ENCODE measurements at regions of chr14 and their contacts with region 1.

Region 1: GRCh38 chr14:100306420-100307219 is at the start of gene SLC25A29:
- DNase-seq: peak; percentile 80 to 81
- ATAC-seq: peak; percentile 93 to 96 (median 95)
- H3K4me3 ChIP-seq: peak within 1 kb of the TSS; percentile 69
- H3K4me3 Mint-ChIP-seq: peak within 1 kb of the TSS; percentile 93
- H3K27ac ChIP-seq: peak within 1 kb of the TSS; percentile 64
- H3K27ac Mint-ChIP-seq: peak within 1 kb of the TSS; percentile 64 to 82
- H3K4me1 ChIP-seq: peaks cover 32% of the 10 kb centered on the region
- H3K4me1 Mint-ChIP-seq: peaks cover 21 to 23% of the 10 kb centered on the region in 2 donors
- H3K27me3 ChIP-seq: no peaks in the 10 kb centered on the region
- H3K27me3 Mint-ChIP-seq: peaks cover 0 to 5% of the 10 kb centered on the region in 2 donors
- CTCF ChIP-seq: no peak
- total RNA-seq, gene SLC25A29: 8.6 to 80.7 (median 69.3) TPM

Region 2: GRCh38 chr14:99982537-99983250 is 323.9 kb before region 1 on chr14:
- intact Hi-C with region 1: no loop called
- DNase-seq: peak; percentile 59 to 89
- ATAC-seq: peak; percentile 95 to 100 (median 100)
- H3K4me3 ChIP-seq: no peak overlapping the region
- H3K4me3 Mint-ChIP-seq: no peak overlapping the region
- H3K27ac ChIP-seq: no peak overlapping the region
- H3K27ac Mint-ChIP-seq: no peak overlapping the region
- H3K4me1 ChIP-seq: no peaks in the 10 kb centered on the region
- H3K4me1 Mint-ChIP-seq: peaks cover 0 to 4% of the 10 kb centered on the region in 2 donors
- H3K27me3 ChIP-seq: no peaks in the 10 kb centered on the region
- H3K27me3 Mint-ChIP-seq: no peaks in the 10 kb centered on the region
- CTCF ChIP-seq: peak; percentile 97

Region 3: DNA sequence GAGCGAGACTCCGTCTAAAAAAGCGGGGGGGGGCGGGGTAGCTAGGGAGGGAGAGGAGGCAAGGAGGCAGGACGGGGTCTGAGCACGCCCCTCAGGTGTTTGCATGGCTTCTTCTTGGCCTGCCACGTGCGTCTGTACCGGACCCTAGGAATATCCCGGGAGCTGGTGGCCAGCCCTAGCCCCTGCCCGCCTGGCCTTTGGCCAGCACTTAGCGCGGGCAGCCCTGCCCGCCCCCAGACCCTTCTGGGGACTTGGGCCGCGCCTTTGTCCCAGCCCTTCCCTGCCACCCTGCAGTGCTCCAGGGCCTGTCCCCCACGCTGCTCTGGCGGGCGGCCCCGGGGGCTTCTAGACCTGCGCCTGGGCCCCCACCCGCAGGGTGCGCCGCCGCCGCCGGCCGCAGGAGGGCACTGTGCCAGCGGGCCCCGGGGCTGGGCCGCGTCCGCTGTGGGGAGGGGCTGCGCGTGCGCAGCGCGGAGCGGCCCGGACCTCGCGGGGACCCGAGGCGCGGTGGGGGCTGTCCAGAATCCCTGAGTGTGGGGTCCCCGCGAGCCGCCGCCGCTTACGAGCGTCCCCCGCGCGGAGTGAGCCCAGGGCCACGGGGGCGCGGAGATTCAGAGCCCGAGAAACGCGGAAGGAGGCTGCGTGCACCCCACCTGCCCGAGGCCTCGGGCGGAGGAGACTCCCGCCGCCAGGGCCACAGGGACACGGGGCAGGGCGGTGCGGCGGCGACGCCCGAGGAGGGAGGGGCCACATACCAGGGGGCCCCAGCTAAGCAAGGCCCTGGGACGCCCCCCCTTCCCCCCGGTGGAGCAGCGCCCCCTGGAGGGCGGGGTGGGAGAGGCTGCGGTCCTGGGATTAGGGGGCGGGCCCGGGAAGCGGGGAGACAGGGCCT is 21.4 kb before region 1 on chr14:
- intact Hi-C with region 1: loop called (anchors 2 kb)
- DNase-seq: peak; percentile 83 to 90
- ATAC-seq: peak; percentile 93 to 96 (median 95)
- H3K4me3 ChIP-seq: peak overlapping the region; percentile 68
- H3K4me3 Mint-ChIP-seq: peak overlapping the region; percentile 47
- H3K27ac ChIP-seq: peak overlapping the region; percentile 73
- H3K27ac Mint-ChIP-seq: peak overlapping the region; percentile 53 to 83
- H3K4me1 ChIP-seq: peaks cover 14% of the 10 kb centered on the region
- H3K4me1 Mint-ChIP-seq: peaks cover 5 to 6% of the 10 kb centered on the region in 2 donors
- H3K27me3 ChIP-seq: no peaks in the 10 kb centered on the region
- H3K27me3 Mint-ChIP-seq: no peaks in the 10 kb centered on the region
- CTCF ChIP-seq: peak; percentile 95